ENCODE measurements at regions of chr17 and their contacts with region 1.

Region 1: DNA sequence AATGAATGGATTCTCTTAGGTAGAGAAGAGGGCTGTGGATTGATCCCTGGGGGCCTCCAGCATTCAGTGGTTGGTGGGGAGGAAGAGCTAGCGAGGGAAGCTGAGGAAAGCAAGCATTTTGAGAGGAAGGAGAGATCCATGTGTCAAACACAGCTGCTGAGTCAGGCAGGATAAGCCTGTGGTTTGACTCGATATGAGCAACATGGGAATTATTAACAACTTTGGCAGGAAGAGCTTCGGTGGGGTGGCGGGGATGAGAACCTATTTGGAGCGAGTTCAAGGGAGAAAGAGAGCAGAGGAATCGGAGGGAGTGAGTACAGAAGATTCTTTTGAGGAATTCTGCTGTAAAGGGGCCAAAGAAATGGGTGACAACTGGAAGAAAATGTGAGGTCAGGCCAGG is 59.5 kb upstream of the CDC42EP4 start:
- DNase-seq: peak in 1 of 6 donors; percentile 4
- ATAC-seq: no peak
- H3K4me3 ChIP-seq: no peak overlapping the region
- H3K27ac ChIP-seq: peak overlapping the region in 1 of 4 donors; percentile 8
- H3K4me1 ChIP-seq: peaks cover 0 to 8% (median 4%) of the 10 kb centered on the region in 3 donors
- H3K27me3 ChIP-seq: no peaks in the 10 kb centered on the region
- CTCF ChIP-seq: no peak

Region 2: DNA sequence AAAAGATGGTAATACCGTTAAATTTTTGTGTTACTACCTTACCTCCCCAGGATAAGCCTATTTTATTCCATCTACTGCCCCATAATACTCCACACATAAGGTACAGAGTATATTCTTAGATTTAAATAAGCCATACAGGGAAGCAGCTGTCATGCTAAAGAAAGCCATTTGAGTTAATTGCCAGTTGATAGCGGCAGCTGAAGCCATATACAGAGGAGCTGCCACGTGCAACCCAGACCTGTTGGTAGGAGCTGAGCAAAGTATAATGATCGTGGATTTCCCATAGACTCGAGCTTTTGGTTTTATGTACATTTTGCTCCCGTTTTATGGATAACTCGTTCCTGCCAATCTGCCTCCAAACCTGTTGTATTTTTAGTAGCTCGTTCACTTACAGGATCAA is 121.6 kb before region 1 on chr17:
- intact Hi-C with region 1: loop called in 2 of 3 experiments (anchors 2 to 5 kb)
- DNase-seq: no peak
- ATAC-seq: no peak
- H3K4me3 ChIP-seq: no peak overlapping the region
- H3K27ac ChIP-seq: no peak overlapping the region
- H3K4me1 ChIP-seq: no peaks in the 10 kb centered on the region
- H3K27me3 ChIP-seq: no peaks in the 10 kb centered on the region
- CTCF ChIP-seq: no peak

Region 3: GRCh38 chr17:73255671-73256181 is 115.6 kb before region 1 on chr17:
- intact Hi-C with region 1: loop called (anchors 2 to 5 kb)
- DNase-seq: peak in 3 of 6 donors; percentile 55 to 82 (median 61)
- ATAC-seq: peak; percentile 74 to 89 (median 84)
- H3K4me3 ChIP-seq: no peak overlapping the region
- H3K27ac ChIP-seq: no peak overlapping the region
- H3K4me1 ChIP-seq: no peaks in the 10 kb centered on the region
- H3K27me3 ChIP-seq: no peaks in the 10 kb centered on the region
- CTCF ChIP-seq: peak; percentile 85 to 97 (median 93)

Measured in pancreas (tissue), 10 donors.